ENCODE measurements at regions of chr4 and their contacts with region 1.

Region 1: DNA sequence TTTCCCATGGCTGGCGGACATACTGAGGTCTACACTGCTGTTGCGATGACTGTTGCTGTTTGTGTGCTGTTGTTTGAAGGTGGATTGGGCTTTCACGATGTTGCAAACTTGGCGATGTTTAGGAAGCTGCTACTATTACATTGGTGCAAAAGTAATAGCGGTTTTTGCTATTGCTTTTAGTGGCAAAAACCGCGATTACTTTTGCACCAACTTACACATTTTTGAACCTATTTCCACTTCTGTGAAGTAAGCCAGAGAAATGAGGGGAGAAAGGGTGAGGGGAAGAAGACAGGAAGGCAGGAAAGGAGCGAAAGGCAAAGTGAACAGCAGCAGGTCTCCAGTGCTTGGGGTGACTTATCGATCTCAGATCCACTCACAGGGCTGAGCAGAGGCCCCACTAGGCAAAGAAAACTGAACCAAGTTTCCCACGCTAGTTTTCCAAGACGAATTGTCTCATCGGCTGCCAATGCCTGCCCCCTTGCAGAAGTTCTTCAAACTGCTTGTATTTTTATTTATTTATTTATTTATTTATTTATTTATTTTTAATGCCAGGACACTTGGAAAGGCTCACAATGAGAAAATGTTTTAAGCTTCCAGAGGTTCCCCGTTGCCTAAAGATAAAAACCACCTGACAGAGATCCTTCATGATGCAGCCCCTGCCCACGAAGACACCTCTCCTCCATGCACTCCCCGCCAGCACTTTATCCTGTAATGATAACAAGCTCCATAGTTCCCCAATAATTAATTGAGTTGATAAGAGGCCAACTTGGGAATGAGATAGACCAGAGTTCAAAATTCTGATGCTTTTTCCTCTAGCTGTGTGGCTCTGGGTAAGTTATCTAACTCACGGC is 43.3 kb downstream of the QDPR start:
- DNase-seq: peak; percentile 23
- ATAC-seq: no peak
- H3K4me3 Mint-ChIP-seq: no peak overlapping the region
- H3K27ac Mint-ChIP-seq: no peak overlapping the region
- H3K4me1 Mint-ChIP-seq: peaks cover 2% of the 10 kb centered on the region
- H3K27me3 Mint-ChIP-seq: no peaks in the 10 kb centered on the region

Region 2: GRCh38 chr4:17347445-17347844 is 121.2 kb before region 1 on chr4:
- CTCF ChIA-PET with region 1: interaction called, 15 read pairs
- POLR2A ChIA-PET with region 1: no interaction called
- intact Hi-C with region 1: loop called in 1 of 2 experiments (anchors 1 kb)
- DNase-seq: peak; percentile 51
- ATAC-seq: peak; percentile 30
- H3K4me3 Mint-ChIP-seq: no peak overlapping the region
- H3K27ac Mint-ChIP-seq: no peak overlapping the region
- H3K4me1 Mint-ChIP-seq: no peaks in the 10 kb centered on the region
- H3K27me3 Mint-ChIP-seq: no peaks in the 10 kb centered on the region

Region 3: GRCh38 chr4:17708992-17709762 is 240.6 kb after region 1 on chr4:
- CTCF ChIA-PET with region 1: no interaction called
- POLR2A ChIA-PET with region 1: no interaction called
- intact Hi-C with region 1: no loop called
- DNase-seq: no peak
- ATAC-seq: no peak
- H3K4me3 Mint-ChIP-seq: no peak overlapping the region
- H3K27ac Mint-ChIP-seq: no peak overlapping the region
- H3K4me1 Mint-ChIP-seq: no peaks in the 10 kb centered on the region
- H3K27me3 Mint-ChIP-seq: peaks cover 3% of the 10 kb centered on the region